Naive thymus-derived CD4-positive, alpha-beta T cell (primary cell): ENCODE measurements at regions of chr1 and their contacts with region 1.

Region 1: DNA sequence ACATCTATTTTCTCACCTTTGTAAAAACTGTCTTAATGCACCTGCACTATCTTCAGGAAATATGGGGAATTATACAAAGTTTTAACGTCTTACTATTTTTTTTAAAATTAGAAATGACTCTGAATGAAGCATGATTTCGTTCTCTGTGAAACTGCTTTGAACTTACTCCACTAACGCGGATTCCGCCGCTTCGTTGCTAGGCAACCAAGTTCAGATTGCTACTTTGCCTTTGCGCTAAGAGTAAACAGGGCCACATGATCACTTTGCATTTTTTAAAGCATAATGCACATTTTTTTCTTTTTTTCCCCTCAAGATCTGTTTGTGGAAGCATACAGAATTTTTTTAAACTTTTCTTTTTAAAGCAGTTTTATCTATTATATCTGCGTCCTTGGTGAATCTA is 690.5 kb downstream of the BRINP3 start:
- DNase-seq: no peak
- ATAC-seq: no peak
- H3K4me3 ChIP-seq: no peak overlapping the region
- H3K4me3 Mint-ChIP-seq: no peak overlapping the region
- H3K27ac ChIP-seq: no peak overlapping the region
- H3K27ac Mint-ChIP-seq: no peak overlapping the region
- H3K4me1 ChIP-seq: no peaks in the 10 kb centered on the region
- H3K4me1 Mint-ChIP-seq: no peaks in the 10 kb centered on the region
- H3K27me3 ChIP-seq: no peaks in the 10 kb centered on the region
- H3K27me3 Mint-ChIP-seq: no peaks in the 10 kb centered on the region

Region 2: GRCh38 chr1:188499690-188500089 is 1287.5 kb before region 1 on chr1:
- CTCF ChIA-PET with region 1: no interaction called
- POLR2A ChIA-PET with region 1: no interaction called
- intact Hi-C with region 1: no loop called
- DNase-seq: no peak
- ATAC-seq: no peak
- H3K4me3 ChIP-seq: no peak overlapping the region
- H3K4me3 Mint-ChIP-seq: no peak overlapping the region
- H3K27ac ChIP-seq: no peak overlapping the region
- H3K27ac Mint-ChIP-seq: no peak overlapping the region
- H3K4me1 ChIP-seq: no peaks in the 10 kb centered on the region
- H3K4me1 Mint-ChIP-seq: no peaks in the 10 kb centered on the region
- H3K27me3 ChIP-seq: no peaks in the 10 kb centered on the region
- H3K27me3 Mint-ChIP-seq: no peaks in the 10 kb centered on the region

Region 3: DNA sequence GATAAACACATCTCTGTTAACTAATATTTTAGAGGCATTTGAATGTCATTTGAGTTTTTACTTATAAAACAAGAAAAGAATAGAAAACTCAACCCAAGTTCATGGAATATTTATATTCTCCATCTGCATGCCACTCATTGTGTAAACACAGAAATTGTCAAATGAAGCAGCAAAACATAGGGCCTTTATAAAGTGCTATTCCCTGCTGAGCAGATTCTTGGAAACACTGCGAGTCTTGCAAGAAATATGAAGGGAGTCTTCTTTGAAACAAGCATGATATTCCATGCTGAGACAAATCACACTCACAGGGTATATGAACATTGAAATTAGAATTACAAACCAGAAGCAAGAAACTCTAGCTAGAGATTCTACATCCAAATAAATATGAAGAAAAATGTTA is 34.6 kb after region 1 on chr1:
- CTCF ChIA-PET with region 1: no interaction called
- POLR2A ChIA-PET with region 1: no interaction called
- intact Hi-C with region 1: no loop called
- DNase-seq: no peak
- ATAC-seq: no peak
- H3K4me3 ChIP-seq: no peak overlapping the region
- H3K4me3 Mint-ChIP-seq: no peak overlapping the region
- H3K27ac ChIP-seq: no peak overlapping the region
- H3K27ac Mint-ChIP-seq: no peak overlapping the region
- H3K4me1 ChIP-seq: no peaks in the 10 kb centered on the region
- H3K4me1 Mint-ChIP-seq: no peaks in the 10 kb centered on the region
- H3K27me3 ChIP-seq: no peaks in the 10 kb centered on the region
- H3K27me3 Mint-ChIP-seq: no peaks in the 10 kb centered on the region

Region 4: DNA sequence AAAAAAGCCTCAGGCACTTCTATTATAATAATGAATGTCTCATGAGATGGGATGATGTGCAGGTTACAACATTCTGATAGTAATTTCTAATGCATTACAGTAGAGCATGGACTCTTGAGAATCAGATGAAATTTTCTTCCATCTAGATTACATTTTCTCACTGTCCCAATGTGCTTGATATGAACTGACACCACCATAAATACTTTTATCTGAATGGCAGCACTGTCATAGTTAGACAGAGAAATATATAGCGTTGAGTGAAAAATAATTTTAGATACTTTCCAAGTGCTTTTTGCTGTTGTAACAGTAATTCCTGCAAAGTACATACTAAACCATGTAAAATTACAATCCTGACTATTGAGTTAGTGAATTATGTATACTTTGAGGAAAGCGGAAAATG is 60.4 kb after region 1 on chr1:
- CTCF ChIA-PET with region 1: no interaction called
- POLR2A ChIA-PET with region 1: no interaction called
- intact Hi-C with region 1: loop called in 1 of 2 experiments (anchors 10 kb)
- DNase-seq: no peak
- ATAC-seq: no peak
- H3K4me3 ChIP-seq: no peak overlapping the region
- H3K4me3 Mint-ChIP-seq: no peak overlapping the region
- H3K27ac ChIP-seq: no peak overlapping the region
- H3K27ac Mint-ChIP-seq: no peak overlapping the region
- H3K4me1 ChIP-seq: no peaks in the 10 kb centered on the region
- H3K4me1 Mint-ChIP-seq: no peaks in the 10 kb centered on the region
- H3K27me3 ChIP-seq: no peaks in the 10 kb centered on the region
- H3K27me3 Mint-ChIP-seq: no peaks in the 10 kb centered on the region